ENCODE measurements at regions of chr4 and their contacts with region 1.

Region 1: GRCh38 chr4:48103483-48104139 is 30.4 kb downstream of the TXK start:
- DNase-seq: peak; percentile 60
- H3K4me3 Mint-ChIP-seq: no peak overlapping the region
- H3K27ac Mint-ChIP-seq: peak overlapping the region; percentile 83
- H3K4me1 Mint-ChIP-seq: peaks cover 30% of the 10 kb centered on the region
- H3K27me3 Mint-ChIP-seq: no peaks in the 10 kb centered on the region

Region 2: DNA sequence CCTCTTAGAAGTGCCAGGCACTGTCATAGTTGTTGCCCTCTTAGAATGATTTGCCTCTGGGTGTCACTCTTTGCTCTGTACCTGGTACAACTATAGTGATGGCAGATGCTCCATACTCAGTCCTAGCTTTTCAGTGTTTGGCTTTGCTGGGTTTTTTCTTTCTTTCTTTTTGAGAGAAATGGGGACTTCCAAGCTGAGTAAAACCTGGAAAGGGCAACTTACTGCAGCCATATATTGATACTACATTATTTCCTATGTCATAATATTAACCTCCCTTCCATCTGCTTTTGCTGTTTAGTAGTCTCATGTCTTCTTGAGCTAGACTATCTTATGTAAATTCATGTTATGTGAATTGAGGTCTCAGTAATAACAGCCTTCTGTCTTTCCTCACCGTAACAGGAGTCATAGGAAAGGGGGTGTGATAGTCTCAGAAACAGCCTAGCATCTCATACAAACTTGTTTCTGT is 38.0 kb before region 1 on chr4:
- CTCF ChIA-PET with region 1: interaction called, 3 read pairs
- POLR2A ChIA-PET with region 1: no interaction called
- intact Hi-C with region 1: loop called (anchors 5 kb)
- DNase-seq: peak; percentile 20
- H3K4me3 Mint-ChIP-seq: no peak overlapping the region
- H3K27ac Mint-ChIP-seq: no peak overlapping the region
- H3K4me1 Mint-ChIP-seq: peaks cover 21% of the 10 kb centered on the region
- H3K27me3 Mint-ChIP-seq: no peaks in the 10 kb centered on the region

Region 3: GRCh38 chr4:48127682-48128394 is 24.2 kb after region 1 on chr4:
- CTCF ChIA-PET with region 1: interaction called, 78 read pairs
- POLR2A ChIA-PET with region 1: interaction called, 3 read pairs
- intact Hi-C with region 1: loop called (anchors 1 kb)
- DNase-seq: peak; percentile 93
- H3K4me3 Mint-ChIP-seq: peak overlapping the region; percentile 63
- H3K27ac Mint-ChIP-seq: peak overlapping the region; percentile 95
- H3K4me1 Mint-ChIP-seq: peaks cover 89% of the 10 kb centered on the region
- H3K27me3 Mint-ChIP-seq: no peaks in the 10 kb centered on the region

Region 4: GRCh38 chr4:48141048-48141447 is 37.4 kb after region 1 on chr4:
- CTCF ChIA-PET with region 1: interaction called, 39 read pairs
- POLR2A ChIA-PET with region 1: no interaction called
- intact Hi-C with region 1: loop called (anchors 1 kb)
- DNase-seq: no peak
- H3K4me3 Mint-ChIP-seq: no peak overlapping the region
- H3K27ac Mint-ChIP-seq: no peak overlapping the region
- H3K4me1 Mint-ChIP-seq: peaks cover 46% of the 10 kb centered on the region
- H3K27me3 Mint-ChIP-seq: no peaks in the 10 kb centered on the region

Region 5: DNA sequence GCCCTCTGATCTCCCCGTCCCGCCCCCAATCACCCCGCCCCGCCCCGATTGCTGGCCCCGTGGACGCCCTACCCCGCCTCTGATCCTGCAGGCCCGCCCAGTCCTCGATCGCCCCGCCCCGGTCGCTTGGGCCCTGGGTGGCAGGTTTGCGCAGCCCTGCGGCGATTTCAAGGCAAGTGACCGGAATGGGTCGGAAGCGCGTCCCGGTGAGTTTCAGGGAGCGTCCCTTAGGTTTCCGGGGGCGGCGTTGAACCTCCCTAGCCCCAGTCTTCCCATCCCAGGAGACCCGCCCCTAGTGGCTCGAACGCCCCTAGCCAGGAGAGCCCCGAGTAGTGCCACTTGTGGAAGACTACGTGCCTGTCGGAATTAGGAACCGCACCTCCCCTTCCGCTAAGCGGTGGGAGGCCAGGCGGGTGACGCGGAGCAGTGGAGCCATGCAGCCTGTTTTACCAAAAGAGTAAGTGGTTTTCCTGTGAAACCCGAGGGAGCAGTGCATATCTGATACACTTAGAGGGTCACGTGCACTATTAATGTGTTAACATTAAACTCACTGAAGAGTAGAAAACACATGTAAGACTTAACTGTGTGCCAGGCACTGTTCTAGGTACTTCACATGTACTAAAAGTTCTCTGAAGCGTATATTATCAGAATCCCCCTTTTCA is 166.4 kb after region 1 on chr4:
- CTCF ChIA-PET with region 1: interaction called, 3 read pairs
- POLR2A ChIA-PET with region 1: no interaction called
- intact Hi-C with region 1: loop called (anchors 2 kb)
- DNase-seq: peak; percentile 95
- H3K4me3 Mint-ChIP-seq: peak overlapping the region; percentile 91
- H3K27ac Mint-ChIP-seq: peak overlapping the region; percentile 75
- H3K4me1 Mint-ChIP-seq: peaks cover 23% of the 10 kb centered on the region
- H3K27me3 Mint-ChIP-seq: no peaks in the 10 kb centered on the region

Region 6: GRCh38 chr4:48774760-48775710 is 671.4 kb after region 1 on chr4:
- CTCF ChIA-PET with region 1: no interaction called
- POLR2A ChIA-PET with region 1: no interaction called
- intact Hi-C with region 1: no loop called
- DNase-seq: no peak
- H3K4me3 Mint-ChIP-seq: no peak overlapping the region
- H3K27ac Mint-ChIP-seq: no peak overlapping the region
- H3K4me1 Mint-ChIP-seq: peaks cover 66% of the 10 kb centered on the region
- H3K27me3 Mint-ChIP-seq: no peaks in the 10 kb centered on the region

Measured in activated CD4-positive, alpha-beta memory T cell treated with anti-CD3 and anti-CD28 coated beads for 36 hours (primary cell).